ENCODE measurements at regions of chr10 and their contacts with region 1.

Region 1: DNA sequence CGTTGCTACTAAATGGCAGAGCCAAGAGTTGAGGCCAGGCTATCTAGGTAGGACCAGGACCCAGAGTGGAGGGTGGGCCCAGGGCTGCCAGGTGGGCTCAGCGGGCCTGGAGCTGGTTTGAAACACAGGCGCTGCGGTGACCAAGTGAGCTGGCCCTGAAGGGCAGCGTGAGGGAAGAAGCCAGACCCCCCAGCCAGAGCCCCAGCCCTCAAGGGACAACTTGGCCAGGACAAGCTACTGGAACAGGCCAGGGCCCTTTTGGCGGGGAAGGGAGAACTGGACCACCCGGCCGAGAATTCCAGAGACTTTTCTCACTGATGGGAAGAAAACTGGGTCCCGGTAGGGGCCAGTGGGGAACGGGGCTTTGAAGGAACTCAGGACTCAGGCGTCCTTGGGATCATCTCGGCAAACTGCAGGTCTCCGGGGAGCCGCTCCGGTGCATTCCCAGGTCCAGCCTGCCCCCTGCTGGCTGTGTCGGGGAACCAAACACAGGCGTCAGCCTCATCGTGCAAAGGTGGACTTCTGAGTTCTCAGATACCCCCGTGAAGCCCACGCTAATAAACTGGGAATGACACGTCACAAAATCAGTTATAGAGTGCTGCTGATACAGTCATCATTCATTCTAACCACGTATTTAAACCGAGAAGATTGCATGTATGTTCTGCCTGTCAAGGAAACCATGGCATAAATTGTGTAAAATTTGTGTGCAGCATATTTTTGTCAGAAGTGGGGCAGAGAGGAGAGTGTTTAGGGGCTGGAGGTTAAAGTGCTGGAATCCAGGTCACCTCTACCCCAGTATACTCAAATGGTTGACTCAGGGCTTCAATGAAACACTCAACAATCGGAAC is 76.0 kb upstream of the CPXM2 start:
- DNase-seq: peak; percentile 68
- H3K4me3 Mint-ChIP-seq: no peak overlapping the region
- H3K27ac Mint-ChIP-seq: no peak overlapping the region
- H3K4me1 Mint-ChIP-seq: no peaks in the 10 kb centered on the region
- H3K27me3 Mint-ChIP-seq: peaks cover 87% of the 10 kb centered on the region
- CTCF ChIP-seq: peak; percentile 92

Region 2: GRCh38 chr10:123573236-123574108 is 394.1 kb before region 1 on chr10:
- CTCF ChIA-PET with region 1: interaction called, 213 read pairs
- POLR2A ChIA-PET with region 1: interaction called, 4 read pairs
- intact Hi-C with region 1: loop called (anchors 2 kb)
- DNase-seq: peak; percentile 86
- H3K4me3 Mint-ChIP-seq: no peak overlapping the region
- H3K27ac Mint-ChIP-seq: no peak overlapping the region
- H3K4me1 Mint-ChIP-seq: peaks cover 7% of the 10 kb centered on the region
- H3K27me3 Mint-ChIP-seq: peaks cover 37% of the 10 kb centered on the region
- CTCF ChIP-seq: peak; percentile 73

Region 3: DNA sequence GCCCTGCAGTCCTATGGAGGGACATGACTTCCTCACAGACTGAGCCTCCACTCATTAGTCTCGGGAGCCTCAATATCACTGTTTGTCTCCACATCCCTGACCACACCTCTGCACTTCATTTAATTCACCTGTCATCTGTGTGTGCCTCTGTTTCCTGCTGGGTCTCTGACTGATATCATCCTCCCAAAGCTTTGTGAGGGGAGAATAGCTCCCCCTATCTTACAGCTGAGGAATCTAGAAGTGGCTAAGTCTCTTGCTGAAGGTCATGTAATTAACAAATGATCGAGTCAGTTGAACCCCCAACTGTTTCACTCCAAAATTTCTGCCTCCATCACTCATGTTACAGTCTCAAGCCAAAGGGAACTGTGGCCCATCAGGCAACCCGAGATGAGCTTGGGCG is 70.5 kb before region 1 on chr10:
- CTCF ChIA-PET with region 1: no interaction called
- POLR2A ChIA-PET with region 1: no interaction called
- intact Hi-C with region 1: no loop called
- DNase-seq: no peak
- H3K4me3 Mint-ChIP-seq: no peak overlapping the region
- H3K27ac Mint-ChIP-seq: no peak overlapping the region
- H3K4me1 Mint-ChIP-seq: no peaks in the 10 kb centered on the region
- H3K27me3 Mint-ChIP-seq: peaks cover 40% of the 10 kb centered on the region
- CTCF ChIP-seq: peak; percentile 14

Region 4: GRCh38 chr10:123986742-123987141 is 19.1 kb after region 1 on chr10:
- CTCF ChIA-PET with region 1: interaction called, 10 read pairs
- POLR2A ChIA-PET with region 1: no interaction called
- intact Hi-C with region 1: no loop called
- DNase-seq: no peak
- H3K4me3 Mint-ChIP-seq: no peak overlapping the region
- H3K27ac Mint-ChIP-seq: no peak overlapping the region
- H3K4me1 Mint-ChIP-seq: peaks cover 6% of the 10 kb centered on the region
- H3K27me3 Mint-ChIP-seq: peaks cover 52% of the 10 kb centered on the region
- CTCF ChIP-seq: no peak

Region 5: GRCh38 chr10:124014416-124015154 is 47.0 kb after region 1 on chr10:
- CTCF ChIA-PET with region 1: no interaction called
- POLR2A ChIA-PET with region 1: no interaction called
- intact Hi-C with region 1: no loop called
- DNase-seq: no peak
- H3K4me3 Mint-ChIP-seq: no peak overlapping the region
- H3K27ac Mint-ChIP-seq: no peak overlapping the region
- H3K4me1 Mint-ChIP-seq: no peaks in the 10 kb centered on the region
- H3K27me3 Mint-ChIP-seq: no peaks in the 10 kb centered on the region
- CTCF ChIP-seq: no peak

Measured in MCF 10A (cell line).